Activated CD4-positive, alpha-beta memory T cell treated with anti-CD3 and anti-CD28 coated beads for 36 hours (primary cell): ENCODE measurements at regions of chr17 and their contacts with region 1.

Region 1: GRCh38 chr17:45197555-45198334 is 23.9 kb upstream of the FMNL1 start:
- DNase-seq: peak; percentile 93
- H3K4me3 Mint-ChIP-seq: no peak overlapping the region
- H3K27ac Mint-ChIP-seq: no peak overlapping the region
- H3K4me1 Mint-ChIP-seq: peaks cover 4% of the 10 kb centered on the region
- H3K27me3 Mint-ChIP-seq: no peaks in the 10 kb centered on the region

Region 2: GRCh38 chr17:45155029-45155428 is 42.7 kb before region 1 on chr17:
- CTCF ChIA-PET with region 1: interaction called, 105 read pairs
- POLR2A ChIA-PET with region 1: interaction called, 4 read pairs
- intact Hi-C with region 1: no loop called
- DNase-seq: no peak
- H3K4me3 Mint-ChIP-seq: no peak overlapping the region
- H3K27ac Mint-ChIP-seq: peak overlapping the region; percentile 49
- H3K4me1 Mint-ChIP-seq: peaks cover 47% of the 10 kb centered on the region
- H3K27me3 Mint-ChIP-seq: no peaks in the 10 kb centered on the region

Region 3: GRCh38 chr17:45172454-45173286 is 25.1 kb before region 1 on chr17:
- CTCF ChIA-PET with region 1: interaction called, 15 read pairs
- POLR2A ChIA-PET with region 1: no interaction called
- intact Hi-C with region 1: no loop called
- DNase-seq: peak; percentile 68
- H3K4me3 Mint-ChIP-seq: peak overlapping the region; percentile 54
- H3K27ac Mint-ChIP-seq: peak overlapping the region; percentile 82
- H3K4me1 Mint-ChIP-seq: peaks cover 11% of the 10 kb centered on the region
- H3K27me3 Mint-ChIP-seq: no peaks in the 10 kb centered on the region